ENCODE measurements at regions of chr17 and their contacts with region 1.

Region 1: GRCh38 chr17:80694085-80694991 is 149.7 kb downstream of the RPTOR start:
- DNase-seq: no peak
- ATAC-seq: no peak
- H3K4me3 ChIP-seq: no peak overlapping the region
- H3K4me3 Mint-ChIP-seq: no peak overlapping the region
- H3K27ac ChIP-seq: no peak overlapping the region
- H3K27ac Mint-ChIP-seq: peak overlapping the region in 3 of 9 donors; percentile 31 to 82 (median 75)
- H3K4me1 ChIP-seq: no peaks in the 10 kb centered on the region
- H3K4me1 Mint-ChIP-seq: peaks cover 18 to 72% (median 54%) of the 10 kb centered on the region in 7 donors
- H3K27me3 ChIP-seq: no peaks in the 10 kb centered on the region
- H3K27me3 Mint-ChIP-seq: no peaks in the 10 kb centered on the region

Region 2: GRCh38 chr17:80704381-80704819 is 10.1 kb after region 1 on chr17:
- CTCF ChIA-PET with region 1: interaction called, 3 read pairs
- POLR2A ChIA-PET with region 1: interaction called, 10 read pairs
- intact Hi-C with region 1: no loop called
- DNase-seq: no peak
- ATAC-seq: no peak
- H3K4me3 ChIP-seq: no peak overlapping the region
- H3K4me3 Mint-ChIP-seq: peak overlapping the region in 7 of 10 donors; percentile 42 to 76 (median 51)
- H3K27ac ChIP-seq: no peak overlapping the region
- H3K27ac Mint-ChIP-seq: peak overlapping the region in 7 of 9 donors; percentile 34 to 96 (median 88)
- H3K4me1 ChIP-seq: peaks cover 33 to 35% of the 10 kb centered on the region in 2 donors
- H3K4me1 Mint-ChIP-seq: peaks cover 46 to 91% (median 83%) of the 10 kb centered on the region in 7 donors
- H3K27me3 ChIP-seq: no peaks in the 10 kb centered on the region
- H3K27me3 Mint-ChIP-seq: no peaks in the 10 kb centered on the region

Region 3: GRCh38 chr17:80737106-80738019 is 43.0 kb after region 1 on chr17:
- CTCF ChIA-PET with region 1: no interaction called
- POLR2A ChIA-PET with region 1: no interaction called
- intact Hi-C with region 1: no loop called
- DNase-seq: no peak
- ATAC-seq: peak; percentile 50
- H3K4me3 ChIP-seq: no peak overlapping the region
- H3K4me3 Mint-ChIP-seq: peak overlapping the region in 4 of 10 donors; percentile 27 to 79 (median 42)
- H3K27ac ChIP-seq: peak overlapping the region; percentile 70
- H3K27ac Mint-ChIP-seq: peak overlapping the region; percentile 30 to 96 (median 87)
- H3K4me1 ChIP-seq: peaks cover 0 to 45% of the 10 kb centered on the region in 2 donors
- H3K4me1 Mint-ChIP-seq: peaks cover 24 to 91% (median 75%) of the 10 kb centered on the region in 7 donors
- H3K27me3 ChIP-seq: no peaks in the 10 kb centered on the region
- H3K27me3 Mint-ChIP-seq: no peaks in the 10 kb centered on the region